ENCODE measurements at regions of chr10 and their contacts with region 1.

Region 1: GRCh38 chr10:28790146-28790545 is 112.8 kb downstream of the BAMBI start:
- DNase-seq: no peak
- ATAC-seq: no peak

Region 2: DNA sequence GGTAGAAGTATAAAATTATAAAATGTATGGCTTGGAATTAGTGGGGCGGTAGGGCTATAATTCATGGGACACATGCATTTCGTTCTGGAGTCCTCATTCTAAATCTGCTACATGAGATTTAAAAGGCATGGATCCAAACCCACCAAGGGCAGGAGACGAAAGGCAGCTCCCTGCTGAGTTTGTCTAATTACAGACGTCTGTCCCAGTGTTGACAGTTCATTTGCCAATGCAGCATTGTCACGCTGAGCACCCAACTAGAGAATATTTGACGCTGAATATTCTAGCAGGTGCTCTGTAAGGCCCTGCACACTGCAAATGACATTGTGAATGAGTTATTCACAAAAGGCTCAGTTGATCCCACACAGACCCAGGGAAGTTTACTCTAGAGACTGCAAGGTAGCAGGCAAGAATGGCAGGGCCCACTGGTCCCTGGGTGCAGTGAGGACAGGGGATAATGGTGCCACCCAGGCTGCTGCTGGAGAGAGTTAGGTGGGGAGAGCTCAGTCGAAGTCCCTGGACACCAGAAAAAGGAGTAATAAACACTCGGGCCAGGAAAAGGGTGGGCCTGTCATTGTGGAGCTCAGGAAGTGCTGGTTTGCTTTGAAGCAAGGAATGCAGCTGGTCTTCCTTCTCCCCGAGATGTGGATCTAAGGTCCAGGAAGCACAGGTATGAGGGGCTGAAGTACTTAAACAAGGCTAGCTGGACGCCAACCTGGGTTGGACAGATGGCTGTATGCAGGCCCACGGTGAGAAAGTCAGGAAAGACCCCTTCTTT is 1344.2 kb after region 1 on chr10:
- intact Hi-C with region 1: loop called (anchors 5 kb)
- DNase-seq: no peak
- ATAC-seq: no peak